A549 (cell line): ENCODE measurements at regions of chr11 and their contacts with region 1.

Region 1: GRCh38 chr11:65802841-65803240 is 16.0 kb downstream of the OVOL1 start:
- DNase-seq: no peak
- ATAC-seq: no peak
- H3K4me3 ChIP-seq: no peak overlapping the region
- H3K27ac ChIP-seq: no peak overlapping the region
- H3K4me1 ChIP-seq: no peaks in the 10 kb centered on the region
- CTCF ChIP-seq: no peak
- EP300 ChIP-seq: no peak
- POLR2A ChIP-seq: no peak
- RAD21 ChIP-seq: no peak

Region 2: DNA sequence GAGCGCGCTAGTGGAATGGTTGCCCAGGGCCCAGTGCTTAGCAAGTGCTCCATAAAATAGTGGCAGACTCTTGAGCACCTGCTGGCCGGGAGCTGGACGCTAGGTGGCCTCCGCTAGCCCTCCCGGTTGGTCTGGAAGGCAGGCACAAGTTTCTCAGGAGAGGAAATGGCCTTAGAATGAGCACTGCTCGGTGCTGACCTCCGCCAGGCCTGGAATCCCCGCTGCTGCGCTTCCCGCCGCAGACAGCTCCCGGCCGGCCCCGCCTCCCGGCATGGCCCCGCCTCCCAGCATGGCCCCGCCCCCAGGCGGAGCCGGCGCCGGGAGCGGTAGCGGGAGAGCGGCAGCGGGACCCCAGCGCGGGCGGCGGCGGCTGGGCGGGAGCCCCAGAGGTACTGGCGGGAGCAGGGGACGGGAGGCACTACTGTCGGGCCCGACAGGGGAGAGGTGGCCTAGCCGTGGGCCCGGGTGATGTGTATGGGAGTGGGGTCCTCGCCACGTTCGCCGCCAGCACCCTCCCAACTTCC is 165.0 kb before region 1 on chr11 and contains the start of gene SIPA1:
- CTCF ChIA-PET with region 1: no interaction called
- POLR2A ChIA-PET with region 1: no interaction called
- DNase-seq: peak; percentile 58 to 91
- ATAC-seq: peak; percentile 60 to 86
- H3K4me3 ChIP-seq: peak within 1 kb of the TSS; percentile 72
- H3K27ac ChIP-seq: peak within 1 kb of the TSS; percentile 73 to 89
- H3K4me1 ChIP-seq: peaks cover 19% of the 10 kb centered on the region
- CTCF ChIP-seq: no peak
- EP300 ChIP-seq: no peak
- POLR2A ChIP-seq: peak; percentile 42
- RAD21 ChIP-seq: no peak; a peak in 2 of 5 replicates
- polyA plus RNA-seq, gene SIPA1: 9.9 and 10.4 TPM in 2 replicates

Region 3: DNA sequence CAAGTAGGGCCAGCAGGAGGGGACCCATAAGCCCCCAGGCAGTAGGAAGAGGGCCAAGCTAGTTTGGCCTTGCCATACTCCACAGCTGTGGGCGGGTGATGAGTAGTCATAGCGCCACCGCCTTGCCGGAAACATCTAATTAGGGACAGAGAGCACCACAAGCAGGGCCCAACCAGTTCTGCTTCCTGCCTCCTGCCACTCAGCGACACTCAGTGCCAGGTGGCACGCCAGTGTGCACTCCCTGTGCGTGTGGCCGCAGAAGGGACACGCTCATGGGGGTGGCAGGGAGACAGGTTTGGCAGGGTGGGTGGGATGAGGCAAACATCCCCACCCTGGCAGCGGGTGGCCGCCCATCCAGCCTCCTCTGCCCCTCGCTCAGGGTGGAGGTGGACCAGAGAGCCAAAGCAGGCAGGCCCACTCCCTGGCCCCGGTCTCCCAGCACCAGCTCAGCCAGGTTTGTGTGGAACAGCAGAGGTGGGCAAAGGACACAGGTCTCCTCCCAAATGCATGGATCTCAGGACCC is 11.1 kb before region 1 on chr11:
- CTCF ChIA-PET with region 1: interaction called, 10 read pairs
- POLR2A ChIA-PET with region 1: no interaction called
- DNase-seq: no peak
- ATAC-seq: no peak
- H3K4me3 ChIP-seq: no peak overlapping the region
- H3K27ac ChIP-seq: no peak overlapping the region
- H3K4me1 ChIP-seq: peaks cover 14% of the 10 kb centered on the region; the same call in 2 of the 3 replicates
- CTCF ChIP-seq: no peak
- EP300 ChIP-seq: no peak
- POLR2A ChIP-seq: no peak
- RAD21 ChIP-seq: no peak